PC-9 (cell line): ENCODE measurements at regions of chr18 and their contacts with region 1.

Region 1: GRCh38 chr18:11980555-11981382 is 538 bp upstream of the IMPA2 start:
- DNase-seq: peak; percentile 95 to 100
- H3K4me3 ChIP-seq: peak overlapping the region; percentile 69
- H3K27ac ChIP-seq: peak overlapping the region; percentile 84
- H3K4me1 ChIP-seq: peaks cover 31% of the 10 kb centered on the region
- H3K27me3 ChIP-seq: no peaks in the 10 kb centered on the region
- CTCF ChIP-seq: no peak

Region 2: GRCh38 chr18:11857177-11857887 is 123.4 kb before region 1 on chr18:
- CTCF ChIA-PET with region 1: no interaction called
- POLR2A ChIA-PET with region 1: no interaction called
- intact Hi-C with region 1: loop called (anchors 1 kb)
- DNase-seq: peak; percentile 87 to 97
- H3K4me3 ChIP-seq: peak overlapping the region; percentile 43; the same call in 1 of the 2 replicates
- H3K27ac ChIP-seq: peak overlapping the region; percentile 97
- H3K4me1 ChIP-seq: peaks cover 62% of the 10 kb centered on the region
- H3K27me3 ChIP-seq: no peaks in the 10 kb centered on the region
- CTCF ChIP-seq: no peak

Region 3: GRCh38 chr18:11908182-11909060 is 72.3 kb before region 1 on chr18 and contains the start of gene MPPE1:
- CTCF ChIA-PET with region 1: interaction called, 6 read pairs
- POLR2A ChIA-PET with region 1: interaction called, 7 read pairs
- intact Hi-C with region 1: loop called (anchors 2 kb)
- DNase-seq: peak; percentile 71 to 89
- H3K4me3 ChIP-seq: peak within 1 kb of the TSS; percentile 84
- H3K27ac ChIP-seq: peak within 1 kb of the TSS; percentile 72
- H3K4me1 ChIP-seq: peaks cover 15% of the 10 kb centered on the region
- H3K27me3 ChIP-seq: no peaks in the 10 kb centered on the region
- CTCF ChIP-seq: no peak
- total RNA-seq, gene MPPE1: 40.7 and 54.9 TPM in 2 replicates

Region 4: GRCh38 chr18:11947214-11948191 is 33.3 kb before region 1 on chr18:
- CTCF ChIA-PET with region 1: interaction called, 10 read pairs
- POLR2A ChIA-PET with region 1: interaction called, 57 read pairs
- intact Hi-C with region 1: loop called (anchors 1 kb)
- DNase-seq: peak; percentile 96 to 97
- H3K4me3 ChIP-seq: peak overlapping the region; percentile 88
- H3K27ac ChIP-seq: peak overlapping the region; percentile 99
- H3K4me1 ChIP-seq: peaks cover 34% of the 10 kb centered on the region
- H3K27me3 ChIP-seq: no peaks in the 10 kb centered on the region
- CTCF ChIP-seq: no peak

Region 5: GRCh38 chr18:12049978-12050811 is 69.4 kb after region 1 on chr18:
- CTCF ChIA-PET with region 1: no interaction called
- POLR2A ChIA-PET with region 1: interaction called, 12 read pairs
- intact Hi-C with region 1: no loop called
- DNase-seq: no peak
- H3K4me3 ChIP-seq: no peak overlapping the region
- H3K27ac ChIP-seq: no peak overlapping the region
- H3K4me1 ChIP-seq: no peaks in the 10 kb centered on the region
- H3K27me3 ChIP-seq: no peaks in the 10 kb centered on the region
- CTCF ChIP-seq: no peak

Region 6: GRCh38 chr18:12376718-12377555 is 396.2 kb after region 1 on chr18 and contains the start of gene AFG3L2:
- CTCF ChIA-PET with region 1: no interaction called
- POLR2A ChIA-PET with region 1: no interaction called
- intact Hi-C with region 1: loop called (anchors 10 kb)
- DNase-seq: peak; percentile 92 to 100
- H3K4me3 ChIP-seq: peak within 1 kb of the TSS; percentile 86
- H3K27ac ChIP-seq: peak within 1 kb of the TSS; percentile 87
- H3K4me1 ChIP-seq: peaks cover 33% of the 10 kb centered on the region
- H3K27me3 ChIP-seq: no peaks in the 10 kb centered on the region
- CTCF ChIP-seq: no peak
- total RNA-seq, gene AFG3L2: 69.4 and 71.1 TPM in 2 replicates

Region 7: GRCh38 chr18:12702221-12703095 is 721.7 kb after region 1 on chr18 and contains the starts of genes CEP76 and PSMG2:
- CTCF ChIA-PET with region 1: no interaction called
- POLR2A ChIA-PET with region 1: no interaction called
- intact Hi-C with region 1: no loop called
- DNase-seq: peak; percentile 61 to 90
- H3K4me3 ChIP-seq: peak within 1 kb of the TSS; percentile 81
- H3K27ac ChIP-seq: peak within 1 kb of the TSS; percentile 92
- H3K4me1 ChIP-seq: peaks cover 31% of the 10 kb centered on the region
- H3K27me3 ChIP-seq: no peaks in the 10 kb centered on the region
- CTCF ChIP-seq: no peak
- total RNA-seq, gene CEP76: 14.5 and 15.1 TPM in 2 replicates
- total RNA-seq, gene PSMG2: 107 and 123 TPM in 2 replicates